Mammary epithelial cell (primary cell): ENCODE measurements at regions of chr3 and their contacts with region 1.

Region 1: DNA sequence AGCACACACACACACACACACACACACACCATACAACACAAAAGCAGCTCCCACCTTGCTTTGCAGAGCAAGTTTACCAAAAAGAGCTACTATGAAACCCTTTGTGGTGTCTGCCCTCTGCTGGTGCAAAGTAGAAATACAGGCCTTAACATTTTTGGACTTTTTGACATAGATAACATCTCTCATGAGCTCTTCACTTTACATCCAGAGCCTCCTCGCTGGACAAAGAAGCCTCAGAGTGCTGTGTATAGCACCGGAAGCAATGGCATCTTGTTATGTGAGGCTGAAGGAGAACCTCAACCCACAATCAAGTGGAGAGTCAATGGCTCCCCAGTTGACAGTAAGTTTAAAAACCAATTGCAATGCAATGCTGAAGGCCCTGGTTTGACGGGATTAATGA is 157.9 kb downstream of the CHL1 start:
- DNase-seq: peak; percentile 31
- H3K4me3 ChIP-seq: no peak overlapping the region
- H3K27ac ChIP-seq: no peak overlapping the region
- H3K4me1 ChIP-seq: no peaks in the 10 kb centered on the region
- H3K27me3 ChIP-seq: no peaks in the 10 kb centered on the region
- CTCF ChIP-seq: peak; percentile 81

Region 2: GRCh38 chr3:377158-377561 is 22.7 kb after region 1 on chr3:
- CTCF ChIA-PET with region 1: interaction called, 9 read pairs
- dilution Hi-C with region 1: no loop called
- in situ Hi-C with region 1: no loop called
- intact Hi-C with region 1: loop called (anchors 2 kb)
- DNase-seq: peak; percentile 26
- H3K4me3 ChIP-seq: peak overlapping the region in 2 of 3 experiments; percentile 8 to 9
- H3K27ac ChIP-seq: no peak overlapping the region
- H3K4me1 ChIP-seq: no peaks in the 10 kb centered on the region
- H3K27me3 ChIP-seq: no peaks in the 10 kb centered on the region
- CTCF ChIP-seq: peak; percentile 42 to 51

Region 3: DNA sequence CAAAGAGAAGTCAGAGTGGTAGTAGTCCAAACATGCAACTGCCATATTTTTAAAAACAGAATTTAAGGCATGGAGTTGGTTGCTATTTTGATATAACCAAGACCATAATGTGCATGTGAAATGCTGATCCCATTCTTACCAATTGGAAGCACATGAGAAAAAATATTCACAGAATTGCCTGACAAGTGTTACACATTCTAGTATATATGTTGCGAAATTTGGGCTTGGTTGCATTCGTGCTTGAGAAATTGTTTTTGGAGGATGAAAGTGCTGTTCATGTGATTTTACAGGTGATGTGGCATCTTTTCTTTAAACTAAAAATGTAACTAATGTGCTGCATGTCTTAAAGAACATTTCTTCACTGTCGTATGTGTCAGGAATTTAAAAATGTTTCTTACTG is 41.9 kb after region 1 on chr3:
- CTCF ChIA-PET with region 1: no interaction called
- dilution Hi-C with region 1: no loop called
- in situ Hi-C with region 1: no loop called
- intact Hi-C with region 1: no loop called
- DNase-seq: no peak
- H3K4me3 ChIP-seq: no peak overlapping the region
- H3K27ac ChIP-seq: no peak overlapping the region
- H3K4me1 ChIP-seq: no peaks in the 10 kb centered on the region
- H3K27me3 ChIP-seq: no peaks in the 10 kb centered on the region
- CTCF ChIP-seq: no peak